Activated naive CD4-positive, alpha-beta T cell treated with anti-CD3 and anti-CD28 coated beads for 36 hours (primary cell): ENCODE measurements at regions of chr11 and their contacts with region 1.

Region 1: DNA sequence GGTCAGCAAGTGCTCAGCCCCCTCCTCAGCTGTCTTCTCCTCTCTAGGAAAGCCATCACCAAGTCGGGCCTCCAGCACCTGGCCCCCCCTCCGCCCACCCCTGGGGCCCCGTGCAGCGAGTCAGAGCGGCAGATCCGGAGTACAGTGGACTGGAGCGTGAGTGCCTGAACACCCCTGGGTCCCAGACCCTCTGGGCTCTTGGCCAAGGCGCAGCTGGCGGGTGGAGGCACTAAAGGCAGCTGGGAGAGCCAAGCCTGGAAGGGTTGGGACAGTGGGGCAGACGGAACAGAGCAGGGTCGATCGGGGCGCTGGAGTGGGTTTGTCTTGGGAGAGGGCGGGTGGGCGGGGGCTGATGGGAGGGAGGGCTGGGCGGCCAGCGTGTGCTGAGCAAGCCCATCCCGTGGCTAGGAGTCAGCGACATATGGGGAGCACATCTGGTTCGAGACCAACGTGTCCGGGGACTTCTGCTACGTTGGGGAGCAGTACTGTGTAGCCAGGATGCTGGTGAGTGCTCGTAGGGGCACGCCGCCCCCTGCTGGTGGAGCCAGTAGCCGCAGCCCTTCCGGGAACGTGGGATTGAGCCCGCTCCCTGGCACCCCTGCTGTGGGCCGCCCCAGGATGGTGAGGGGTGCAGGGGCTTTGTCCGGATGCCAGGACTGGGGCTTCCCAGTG is 14.1 kb upstream of the MDK start:
- DNase-seq: peak; percentile 85
- H3K4me3 Mint-ChIP-seq: no peak overlapping the region
- H3K27ac Mint-ChIP-seq: peak overlapping the region; percentile 80
- H3K4me1 Mint-ChIP-seq: peaks cover 29% of the 10 kb centered on the region
- H3K27me3 Mint-ChIP-seq: no peaks in the 10 kb centered on the region

Region 2: GRCh38 chr11:46315033-46315738 is 52.2 kb before region 1 on chr11:
- CTCF ChIA-PET with region 1: interaction called, 6 read pairs
- intact Hi-C with region 1: loop called (anchors 1 kb)
- DNase-seq: peak; percentile 85
- H3K4me3 Mint-ChIP-seq: no peak overlapping the region
- H3K27ac Mint-ChIP-seq: no peak overlapping the region
- H3K4me1 Mint-ChIP-seq: peaks cover 20% of the 10 kb centered on the region
- H3K27me3 Mint-ChIP-seq: no peaks in the 10 kb centered on the region

Region 3: GRCh38 chr11:46346886-46347636 is 20.3 kb before region 1 on chr11 and contains the start of gene DGKZ:
- CTCF ChIA-PET with region 1: interaction called, 368 read pairs
- intact Hi-C with region 1: loop called (anchors 1 kb)
- DNase-seq: peak; percentile 86
- H3K4me3 Mint-ChIP-seq: peak within 1 kb of the TSS; percentile 84
- H3K27ac Mint-ChIP-seq: peak within 1 kb of the TSS; percentile 92
- H3K4me1 Mint-ChIP-seq: peaks cover 80% of the 10 kb centered on the region
- H3K27me3 Mint-ChIP-seq: no peaks in the 10 kb centered on the region
- total RNA-seq, gene DGKZ: 82.9 to 89.2 TPM

Region 4: DNA sequence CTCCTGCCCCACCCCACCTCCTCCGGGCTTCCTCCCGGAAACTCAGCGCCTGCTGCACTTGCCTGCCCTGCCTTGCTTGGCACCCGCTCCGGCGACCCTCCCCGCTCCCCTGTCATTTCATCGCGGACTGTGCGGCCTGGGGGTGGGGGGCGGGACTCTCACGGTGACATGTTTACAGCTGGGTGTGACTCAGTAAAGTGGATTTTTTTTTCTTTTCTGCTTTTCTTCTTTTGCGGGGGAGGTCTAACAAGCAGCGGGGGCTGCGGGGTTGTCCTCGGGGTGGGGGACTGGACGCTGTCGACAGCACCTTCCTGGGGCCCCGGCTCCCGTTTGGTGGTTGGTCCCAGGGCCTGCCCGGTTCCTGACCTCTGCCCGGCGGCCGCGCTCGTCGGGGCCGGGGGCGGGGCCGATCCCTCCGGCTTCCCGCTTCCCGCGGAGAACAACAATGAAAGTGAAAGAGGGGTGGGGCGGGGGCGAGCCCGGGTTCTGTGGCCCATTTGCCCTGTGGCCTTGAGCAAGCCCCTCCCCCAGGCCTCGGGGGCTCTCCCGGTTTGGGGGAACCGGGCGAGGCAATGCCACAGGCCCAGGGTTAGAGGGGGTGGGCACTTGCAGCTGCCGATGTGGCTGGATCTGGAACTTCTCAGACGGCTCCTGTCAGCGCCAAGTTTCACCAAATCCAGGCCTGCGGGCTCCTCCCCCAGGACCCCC is 13.1 kb after region 1 on chr11:
- CTCF ChIA-PET with region 1: interaction called, 18 read pairs
- intact Hi-C with region 1: no loop called
- DNase-seq: peak; percentile 90
- H3K4me3 Mint-ChIP-seq: peak overlapping the region; percentile 67
- H3K27ac Mint-ChIP-seq: peak overlapping the region; percentile 15
- H3K4me1 Mint-ChIP-seq: peaks cover 11% of the 10 kb centered on the region
- H3K27me3 Mint-ChIP-seq: peaks cover 7% of the 10 kb centered on the region

Region 5: DNA sequence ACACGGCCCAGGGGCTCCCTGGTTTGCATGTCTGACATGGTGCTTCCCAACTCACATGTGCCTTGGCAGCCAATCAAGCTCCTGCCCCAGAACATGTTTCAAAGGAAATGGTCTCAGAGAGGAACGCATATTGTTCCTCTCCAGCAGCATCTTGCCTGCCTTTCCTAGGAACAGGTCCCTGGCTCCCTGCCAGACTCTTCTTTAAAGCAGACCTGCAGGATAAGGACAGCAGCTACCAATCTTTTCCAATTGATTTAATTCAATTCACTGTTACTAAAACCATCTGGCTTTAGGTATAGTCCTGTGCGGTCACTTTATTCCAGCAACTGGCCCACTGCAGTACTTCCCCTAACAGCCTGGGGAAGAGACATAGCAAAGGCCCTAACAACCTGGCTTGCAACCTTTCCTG is 146.6 kb after region 1 on chr11:
- CTCF ChIA-PET with region 1: no interaction called
- intact Hi-C with region 1: no loop called
- DNase-seq: no peak
- H3K4me3 Mint-ChIP-seq: no peak overlapping the region
- H3K27ac Mint-ChIP-seq: no peak overlapping the region
- H3K4me1 Mint-ChIP-seq: peaks cover 9% of the 10 kb centered on the region
- H3K27me3 Mint-ChIP-seq: no peaks in the 10 kb centered on the region

Region 6: GRCh38 chr11:46537537-46538295 is 170.3 kb after region 1 on chr11:
- CTCF ChIA-PET with region 1: interaction called, 3 read pairs
- intact Hi-C with region 1: loop called (anchors 1 kb)
- DNase-seq: peak; percentile 79
- H3K4me3 Mint-ChIP-seq: no peak overlapping the region
- H3K27ac Mint-ChIP-seq: no peak overlapping the region
- H3K4me1 Mint-ChIP-seq: peaks cover 21% of the 10 kb centered on the region
- H3K27me3 Mint-ChIP-seq: no peaks in the 10 kb centered on the region